Activated T-helper 1 cell treated with anti-CD3 and anti-CD28 coated beads, Interleukin-12 subunit alpha, Interleukin-12 subunit beta, Interleukin-2, Interleukin-4 antibody, amounts not matched to agents 30 ng/mL and 10 ng/mL and 1 ng/mL, durations not matched to agents 14 hours and 24 hours and 36 hours (primary cell): ENCODE measurements at regions of chr7 and their contacts with region 1.

Region 1: GRCh38 chr7:136405931-136406777 is 429.0 kb upstream of the MTPN start:
- DNase-seq: no peak
- H3K4me3 Mint-ChIP-seq: no peak overlapping the region
- H3K27ac Mint-ChIP-seq: no peak overlapping the region
- H3K4me1 Mint-ChIP-seq: peaks cover 7% of the 10 kb centered on the region
- H3K27me3 Mint-ChIP-seq: no peaks in the 10 kb centered on the region

Region 2: GRCh38 chr7:137454246-137454724 is 1048.1 kb after region 1 on chr7:
- intact Hi-C with region 1: loop called (anchors 1 kb)
- DNase-seq: no peak
- H3K4me3 Mint-ChIP-seq: no peak overlapping the region
- H3K27ac Mint-ChIP-seq: no peak overlapping the region
- H3K4me1 Mint-ChIP-seq: no peaks in the 10 kb centered on the region
- H3K27me3 Mint-ChIP-seq: peaks cover 2% of the 10 kb centered on the region